Prostate gland (tissue), 2 donors: ENCODE measurements at regions of chr19 and their contacts with region 1.

Region 1: DNA sequence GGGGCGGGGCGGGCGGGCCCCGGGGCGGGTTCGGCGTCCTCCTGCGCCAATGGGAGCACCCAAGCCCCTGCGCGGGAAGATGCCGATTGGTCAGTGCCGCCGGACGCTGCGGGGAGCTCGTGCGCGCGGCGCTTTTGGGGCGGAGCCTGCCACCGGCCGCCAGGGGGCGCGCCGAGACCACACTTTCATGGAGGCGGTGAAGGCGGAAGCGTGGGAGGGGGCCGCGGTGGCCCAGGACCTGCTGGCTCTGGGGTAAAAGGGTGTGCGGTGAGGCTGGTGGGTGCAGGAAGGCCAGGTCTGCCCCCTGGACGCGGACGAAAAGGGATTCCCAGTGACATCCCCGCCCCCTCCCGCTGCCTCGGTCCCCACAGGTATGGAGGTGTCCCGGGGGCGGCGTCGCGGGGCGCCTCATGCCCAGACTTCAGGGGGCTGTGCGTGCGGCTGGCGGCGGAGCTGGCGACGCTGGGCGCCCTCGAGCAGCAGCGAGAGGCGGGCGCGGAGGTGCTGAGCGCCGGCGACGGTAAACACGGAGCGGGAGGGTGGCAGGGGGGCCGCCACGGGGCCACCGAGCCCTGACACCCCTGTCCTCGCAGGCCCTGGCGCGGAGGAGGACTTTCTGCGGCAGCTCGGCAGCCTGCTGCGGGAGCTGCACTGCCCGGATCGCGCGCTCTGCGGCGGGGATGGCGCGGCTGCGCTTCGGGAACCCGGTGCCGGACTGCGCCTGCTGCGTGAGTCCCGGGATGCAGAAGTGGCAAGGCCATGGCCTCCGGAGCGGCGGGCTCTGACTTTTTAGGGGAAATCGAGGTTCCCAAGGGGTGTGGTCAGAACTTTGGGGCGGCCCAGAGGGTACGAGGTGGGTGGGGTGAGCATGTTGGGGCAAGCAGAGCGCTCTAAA is at the start of gene FAM98C:
- DNase-seq: peak; percentile 96
- H3K4me3 ChIP-seq: peak within 1 kb of the TSS; percentile 83 to 86
- H3K27ac ChIP-seq: peak within 1 kb of the TSS; percentile 83 to 85
- H3K4me1 ChIP-seq: no peaks in the 10 kb centered on the region
- H3K27me3 ChIP-seq: peaks cover 8% of the 10 kb centered on the region
- CTCF ChIP-seq: peak; percentile 94 to 100 (median 100)
- POLR2A ChIP-seq: peak; percentile 46
- total RNA-seq, gene FAM98C: 19.9 to 59.5 TPM

Region 2: DNA sequence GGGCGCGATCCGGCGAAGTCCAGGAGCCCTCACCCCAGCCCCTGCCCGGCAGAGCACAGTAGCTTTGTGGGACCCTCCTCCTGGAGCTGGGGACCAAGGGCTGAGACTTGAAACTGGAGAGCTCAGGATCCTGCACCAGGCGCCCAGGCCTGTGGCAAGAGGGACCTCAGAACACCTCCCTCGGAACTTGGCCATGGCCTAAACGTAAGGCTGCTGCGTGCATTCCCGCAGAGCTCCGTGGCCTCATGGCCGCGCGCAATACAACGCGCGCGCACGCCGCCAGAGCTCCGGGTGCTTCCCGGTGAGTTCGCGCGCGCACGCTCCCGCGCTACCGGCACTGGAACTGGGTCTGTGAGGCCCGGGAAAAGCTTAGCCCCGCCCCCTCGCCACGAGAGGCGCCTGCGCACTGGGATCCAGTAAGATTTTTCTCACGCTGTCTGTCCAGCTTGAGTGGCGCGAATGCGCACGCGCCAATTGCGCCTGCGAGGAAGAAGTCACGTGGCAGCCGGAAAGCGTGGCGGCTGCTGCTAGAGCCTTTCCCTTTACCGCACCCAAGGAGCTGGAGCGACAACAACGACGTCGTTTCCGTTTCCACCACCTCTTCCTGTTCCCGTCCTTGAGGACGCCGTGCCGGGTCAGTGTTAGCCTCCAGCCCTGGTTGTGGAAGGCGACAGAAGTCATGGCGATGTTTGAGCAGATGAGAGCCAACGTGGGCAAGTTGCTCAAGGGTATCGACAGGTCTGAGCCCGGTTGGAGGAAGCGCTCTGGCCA is 215.6 kb after region 1 on chr19 and contains the start of gene EIF3K:
- intact Hi-C with region 1: loop called (anchors 5 kb)
- DNase-seq: peak; percentile 98
- H3K4me3 ChIP-seq: peak within 1 kb of the TSS; percentile 58 to 75
- H3K27ac ChIP-seq: peak within 1 kb of the TSS; percentile 52 to 70
- H3K4me1 ChIP-seq: peaks cover 2% of the 10 kb centered on the region
- H3K27me3 ChIP-seq: no peaks in the 10 kb centered on the region
- CTCF ChIP-seq: peak in 2 of 4 experiments; percentile 11 to 29
- POLR2A ChIP-seq: peak; percentile 51
- total RNA-seq, gene EIF3K: 368 to 618 TPM

Region 3: DNA sequence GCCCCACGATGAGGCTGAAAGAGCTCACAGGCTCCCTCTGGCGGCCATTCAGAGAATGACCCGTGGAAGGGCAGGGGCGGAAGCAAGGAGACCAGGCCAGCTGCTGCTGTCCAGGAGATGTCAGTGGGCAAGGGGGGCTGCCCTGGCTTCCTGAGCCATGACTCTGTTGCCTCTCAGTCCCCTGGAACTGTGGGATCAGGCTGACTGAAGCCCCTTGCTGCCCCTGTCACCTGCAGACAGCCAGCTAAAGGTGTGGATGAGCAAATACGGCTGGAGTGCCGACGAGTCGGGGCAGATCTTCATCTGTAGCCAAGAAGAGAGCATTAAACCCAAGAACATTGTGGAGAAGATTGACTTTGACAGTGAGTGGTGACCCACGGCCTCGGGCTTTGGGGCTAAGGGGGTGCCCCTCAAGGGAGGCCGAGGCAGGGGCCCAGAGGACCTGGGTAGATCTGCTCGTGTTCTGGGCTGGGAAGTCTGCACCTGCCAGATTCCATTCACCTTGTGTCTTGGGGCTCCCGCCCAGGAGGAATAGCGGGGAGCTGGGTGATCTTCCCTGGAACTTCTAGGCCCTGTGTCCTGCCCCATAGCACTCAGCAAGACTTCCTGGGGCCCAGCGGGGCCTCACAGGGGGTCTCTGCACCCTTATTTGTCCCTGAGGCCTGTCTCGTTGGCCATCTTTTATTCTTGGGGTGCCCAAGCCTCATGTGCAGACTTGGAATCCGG is 231.7 kb after region 1 on chr19:
- intact Hi-C with region 1: loop called (anchors 5 kb)
- DNase-seq: peak; percentile 60
- H3K4me3 ChIP-seq: no peak overlapping the region
- H3K27ac ChIP-seq: no peak overlapping the region
- H3K4me1 ChIP-seq: no peaks in the 10 kb centered on the region
- H3K27me3 ChIP-seq: no peaks in the 10 kb centered on the region
- CTCF ChIP-seq: peak; percentile 84 to 94 (median 91)
- POLR2A ChIP-seq: no peak

Region 4: DNA sequence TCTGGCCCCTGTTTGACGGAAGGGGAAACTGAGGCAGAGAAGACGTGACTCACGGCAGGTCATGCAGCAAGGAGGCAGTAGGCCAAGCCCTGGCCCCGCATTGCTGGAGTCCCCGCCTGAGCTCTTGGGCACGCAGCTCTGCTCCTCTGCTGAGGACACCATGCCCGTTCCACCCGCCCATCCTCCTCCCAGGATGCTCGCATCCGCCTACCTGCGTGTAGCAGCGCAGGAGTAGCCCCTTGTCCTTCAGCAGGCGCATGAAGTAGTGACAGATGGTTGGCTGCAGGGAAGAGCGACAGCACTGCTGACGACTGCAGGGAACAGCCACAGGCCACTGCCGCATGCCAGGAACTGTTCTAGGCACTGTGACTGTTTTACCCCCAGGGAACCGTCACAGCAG is 485.7 kb after region 1 on chr19:
- intact Hi-C with region 1: loop called (anchors 5 kb)
- DNase-seq: no peak
- H3K4me3 ChIP-seq: no peak overlapping the region
- H3K27ac ChIP-seq: no peak overlapping the region
- H3K4me1 ChIP-seq: no peaks in the 10 kb centered on the region
- H3K27me3 ChIP-seq: no peaks in the 10 kb centered on the region
- CTCF ChIP-seq: no peak
- POLR2A ChIP-seq: no peak

Region 5: DNA sequence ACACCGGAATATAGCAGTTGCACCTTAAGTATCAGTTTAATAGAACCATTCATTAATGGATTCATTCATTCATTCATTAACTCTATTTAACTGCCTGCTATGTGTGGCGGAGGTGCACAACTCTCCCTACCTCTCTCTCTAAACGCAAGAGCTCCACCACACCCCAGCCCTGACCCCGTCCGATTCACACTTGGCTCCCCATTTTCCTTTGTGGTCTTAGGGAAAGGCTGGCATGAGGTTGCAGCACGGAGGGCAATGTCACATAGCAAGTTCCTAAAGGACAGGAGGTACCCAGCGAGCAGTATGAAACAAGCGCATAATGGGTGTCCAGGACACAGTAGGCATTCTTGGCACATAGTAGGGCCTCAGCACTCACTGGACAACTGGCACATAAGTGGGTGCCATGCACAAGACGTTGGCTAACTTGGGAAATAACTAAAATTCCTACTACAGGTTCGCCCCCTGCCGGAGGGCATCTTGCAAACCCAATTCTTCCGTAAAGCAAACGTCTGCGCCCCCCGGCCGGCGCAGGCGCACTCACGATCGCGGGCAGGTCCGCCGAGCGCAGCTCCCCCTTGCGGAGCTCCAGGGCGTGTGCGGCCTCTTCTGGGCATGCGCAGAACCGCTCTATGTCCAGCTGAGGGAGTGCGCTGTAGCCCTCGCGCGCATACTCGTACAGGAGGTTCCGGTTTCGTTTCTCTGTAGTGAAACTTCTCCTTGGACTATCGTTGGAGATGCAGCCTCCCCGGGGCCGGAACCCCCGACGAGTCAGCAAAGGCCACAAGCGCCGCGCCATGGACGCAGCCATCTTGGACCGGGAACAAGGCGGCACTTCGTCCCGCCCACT is 526.9 kb after region 1 on chr19 and contains the start of gene SARS2:
- intact Hi-C with region 1: loop called (anchors 10 kb)
- DNase-seq: peak; percentile 85
- H3K4me3 ChIP-seq: peak within 1 kb of the TSS; percentile 60 to 61
- H3K27ac ChIP-seq: peak within 1 kb of the TSS; percentile 91 to 94
- H3K4me1 ChIP-seq: peaks cover 5% of the 10 kb centered on the region
- H3K27me3 ChIP-seq: no peaks in the 10 kb centered on the region
- CTCF ChIP-seq: peak; percentile 99 to 100 (median 100)
- POLR2A ChIP-seq: peak; percentile 16
- total RNA-seq, gene SARS2: 23.3 to 57.5 TPM